Activated CD4-positive, alpha-beta T cell treated with anti-CD3 and anti-CD28 coated beads for 36 hours (primary cell): ENCODE measurements at regions of chr11 and their contacts with region 1.

Region 1: GRCh38 chr11:119334174-119334930 is at the start of gene RNF26:
- DNase-seq: peak; percentile 96
- ATAC-seq: peak; percentile 96
- H3K4me3 Mint-ChIP-seq: peak within 1 kb of the TSS; percentile 99
- H3K27ac Mint-ChIP-seq: peak within 1 kb of the TSS; percentile 99
- H3K4me1 Mint-ChIP-seq: peaks cover 29% of the 10 kb centered on the region
- H3K27me3 Mint-ChIP-seq: peaks cover 7% of the 10 kb centered on the region
- total RNA-seq, gene RNF26: 29.9 TPM

Region 2: DNA sequence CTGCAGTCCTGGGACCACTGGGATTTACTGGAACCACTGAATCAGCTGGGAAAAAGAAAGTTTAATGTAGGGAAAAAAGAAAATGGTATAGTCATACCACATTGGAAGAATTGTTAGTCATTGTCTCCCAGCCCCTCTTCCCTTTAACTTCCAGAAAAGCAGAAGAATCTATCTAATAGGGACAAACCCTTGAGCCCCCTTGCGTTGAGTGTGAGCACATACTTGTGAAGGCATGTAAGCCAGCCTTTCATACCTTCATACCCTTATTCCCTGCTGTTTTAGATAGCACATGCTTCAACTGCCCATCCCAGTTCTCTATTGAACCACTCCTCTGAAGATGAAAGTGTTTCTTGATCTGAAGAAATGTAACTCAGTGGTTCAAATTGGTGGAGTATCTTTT is 661.5 kb before region 1 on chr11:
- CTCF ChIA-PET with region 1: no interaction called
- POLR2A ChIA-PET with region 1: no interaction called
- intact Hi-C with region 1: no loop called
- DNase-seq: no peak
- ATAC-seq: no peak
- H3K4me3 Mint-ChIP-seq: no peak overlapping the region
- H3K27ac Mint-ChIP-seq: no peak overlapping the region
- H3K4me1 Mint-ChIP-seq: no peaks in the 10 kb centered on the region
- H3K27me3 Mint-ChIP-seq: peaks cover 8% of the 10 kb centered on the region

Region 3: DNA sequence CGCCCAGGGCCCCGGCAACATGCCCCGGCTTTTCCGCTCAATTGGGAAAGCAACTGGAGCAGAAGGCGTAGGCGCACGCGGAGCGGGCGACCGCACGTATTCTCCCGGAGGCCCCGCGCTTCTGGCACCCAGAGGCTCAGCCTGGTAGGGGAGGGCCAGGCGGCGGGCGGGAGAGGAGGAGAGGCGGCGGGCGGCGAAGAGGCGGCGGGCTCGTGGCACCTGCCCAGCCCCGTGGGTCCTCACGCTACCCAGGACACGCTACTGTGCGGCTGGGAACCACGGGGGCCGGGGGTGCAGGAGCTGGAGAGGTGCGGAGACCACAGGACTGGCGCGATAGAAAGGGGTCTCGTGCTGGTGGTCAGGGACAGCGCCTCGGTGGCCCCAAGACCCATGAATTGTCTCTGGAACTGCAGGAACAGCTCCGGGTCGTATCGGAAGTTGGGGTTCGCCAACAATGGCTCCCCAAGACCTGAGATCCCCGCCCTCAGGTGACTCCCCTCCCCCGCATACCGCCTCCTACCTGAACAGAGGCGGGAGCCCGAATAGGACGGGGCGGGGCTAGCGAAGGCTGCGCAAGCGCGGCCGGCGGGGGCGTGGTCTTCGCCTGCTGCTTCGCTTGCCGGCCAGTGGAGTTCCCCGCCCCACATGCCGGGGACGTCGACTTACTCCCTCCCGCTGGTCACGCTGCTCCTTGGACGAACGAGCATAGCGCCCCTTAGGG is 303.9 kb before region 1 on chr11 and contains the start of gene SLC37A4:
- CTCF ChIA-PET with region 1: no interaction called
- POLR2A ChIA-PET with region 1: no interaction called
- intact Hi-C with region 1: loop called in 1 of 2 experiments (anchors 1 kb)
- DNase-seq: peak; percentile 99
- ATAC-seq: peak; percentile 94
- H3K4me3 Mint-ChIP-seq: peak within 1 kb of the TSS; percentile 76
- H3K27ac Mint-ChIP-seq: peak within 1 kb of the TSS; percentile 86
- H3K4me1 Mint-ChIP-seq: peaks cover 19% of the 10 kb centered on the region
- H3K27me3 Mint-ChIP-seq: no peaks in the 10 kb centered on the region
- total RNA-seq, gene SLC37A4: 26.2 to 36.2 TPM

Region 4: DNA sequence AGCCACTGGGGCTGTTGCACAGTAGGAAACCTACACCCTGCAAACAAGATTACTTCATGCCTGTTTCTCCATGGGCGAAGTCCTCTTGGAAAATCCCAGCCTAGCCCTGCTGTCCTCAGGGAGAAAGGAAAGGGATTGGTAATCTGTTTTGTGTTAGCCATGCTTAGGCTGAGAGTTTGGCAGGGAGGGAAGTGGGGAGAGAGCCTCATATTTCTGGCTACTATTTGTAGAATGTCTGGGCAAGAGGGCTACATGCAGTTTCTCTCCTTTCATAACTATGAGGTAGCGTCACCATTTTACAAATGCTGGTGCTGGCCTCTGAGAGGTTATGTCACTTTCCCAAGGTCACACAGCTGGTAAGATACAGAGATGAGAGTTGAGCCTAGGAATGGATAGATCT is 12.9 kb after region 1 on chr11:
- CTCF ChIA-PET with region 1: interaction called, 23 read pairs
- POLR2A ChIA-PET with region 1: no interaction called
- intact Hi-C with region 1: no loop called
- DNase-seq: no peak
- ATAC-seq: no peak
- H3K4me3 Mint-ChIP-seq: no peak overlapping the region
- H3K27ac Mint-ChIP-seq: no peak overlapping the region
- H3K4me1 Mint-ChIP-seq: peaks cover 4% of the 10 kb centered on the region
- H3K27me3 Mint-ChIP-seq: peaks cover 26% of the 10 kb centered on the region

Region 5: DNA sequence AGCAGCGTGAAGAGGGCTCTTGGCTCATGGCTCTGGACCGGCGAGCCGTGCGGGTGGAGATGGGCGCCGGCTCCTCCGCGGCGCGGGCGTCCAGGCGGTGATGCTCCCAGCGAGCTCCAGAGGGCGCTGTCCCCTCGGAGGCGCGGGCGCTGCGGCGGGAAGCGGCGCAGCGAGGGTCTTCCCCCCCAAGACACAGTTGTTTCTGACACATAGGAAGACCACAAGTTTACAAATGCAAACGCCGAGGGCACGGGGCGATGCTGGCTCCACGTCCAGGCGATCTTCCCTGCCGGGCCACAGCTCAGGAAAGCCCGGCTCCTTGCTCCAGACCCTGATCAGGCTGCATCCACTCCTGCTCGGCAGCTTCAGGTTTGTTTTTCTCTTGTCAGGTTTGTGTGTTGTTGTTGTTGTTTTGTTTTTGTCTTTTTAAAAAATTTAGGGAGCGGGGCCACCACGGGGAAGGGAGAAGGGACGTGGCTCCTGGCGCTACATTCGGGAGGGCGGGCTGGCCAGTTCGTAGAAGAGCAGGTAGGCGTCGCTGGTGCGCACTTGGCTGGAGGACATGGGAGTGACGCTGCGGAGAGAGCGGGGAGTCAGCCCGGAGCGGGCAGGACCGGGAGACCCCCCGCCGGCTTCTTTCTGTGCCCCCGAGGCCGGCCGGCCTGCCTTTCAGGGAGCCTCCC is 22.1 kb after region 1 on chr11:
- CTCF ChIA-PET with region 1: interaction called, 19 read pairs
- POLR2A ChIA-PET with region 1: interaction called, 5 read pairs
- intact Hi-C with region 1: loop called in 1 of 2 experiments (anchors 1 kb)
- DNase-seq: peak; percentile 89
- ATAC-seq: peak; percentile 80
- H3K4me3 Mint-ChIP-seq: peak overlapping the region; percentile 70
- H3K27ac Mint-ChIP-seq: peak overlapping the region; percentile 70
- H3K4me1 Mint-ChIP-seq: peaks cover 17% of the 10 kb centered on the region
- H3K27me3 Mint-ChIP-seq: peaks cover 29% of the 10 kb centered on the region

Region 6: DNA sequence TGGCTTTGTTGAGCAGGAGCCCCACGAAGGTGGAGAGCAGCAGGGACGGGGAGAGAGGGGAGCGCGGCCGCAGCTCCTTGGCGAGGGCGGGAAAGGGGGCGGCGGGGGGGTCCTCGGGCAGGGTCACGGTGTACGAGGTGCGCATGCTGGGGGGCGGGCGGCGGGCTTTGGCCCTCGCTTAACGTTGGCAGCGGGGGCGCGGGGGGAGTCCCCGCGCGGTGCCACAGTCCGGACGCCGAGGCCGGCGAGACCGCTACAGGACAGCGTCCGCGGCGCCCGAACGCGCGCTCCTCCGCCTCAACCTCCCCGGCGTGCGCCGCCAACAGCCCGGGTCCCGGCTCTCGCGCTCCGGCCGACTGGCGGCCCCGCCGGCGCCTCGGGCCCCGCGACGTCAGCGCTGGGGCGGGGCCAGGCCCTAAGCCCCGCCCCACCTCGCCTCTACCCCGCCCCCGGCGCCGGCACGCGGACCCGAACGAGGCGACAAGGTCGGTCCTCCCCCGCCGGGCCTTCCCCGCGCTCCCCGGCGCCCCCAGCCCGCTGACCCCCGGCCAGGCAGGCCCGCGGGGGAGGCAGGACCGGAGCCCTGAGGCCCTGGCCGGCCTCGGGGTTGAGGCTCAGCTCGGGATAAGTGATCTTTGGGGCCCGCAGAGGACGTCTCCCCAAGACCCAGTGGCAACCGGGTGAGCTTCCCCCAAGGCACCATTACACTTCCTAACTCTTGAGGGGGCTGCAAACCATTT is 29.7 kb after region 1 on chr11:
- CTCF ChIA-PET with region 1: interaction called, 13 read pairs
- POLR2A ChIA-PET with region 1: interaction called, 3 read pairs
- intact Hi-C with region 1: no loop called
- DNase-seq: peak; percentile 74
- ATAC-seq: peak; percentile 49
- H3K4me3 Mint-ChIP-seq: peak overlapping the region; percentile 37
- H3K27ac Mint-ChIP-seq: no peak overlapping the region
- H3K4me1 Mint-ChIP-seq: peaks cover 26% of the 10 kb centered on the region
- H3K27me3 Mint-ChIP-seq: peaks cover 38% of the 10 kb centered on the region

Region 7: GRCh38 chr11:119381181-119381988 is 47.0 kb after region 1 on chr11 and contains the start of gene USP2:
- CTCF ChIA-PET with region 1: interaction called, 16 read pairs
- POLR2A ChIA-PET with region 1: no interaction called
- intact Hi-C with region 1: loop called in 1 of 2 experiments (anchors 1 kb)
- DNase-seq: peak; percentile 98
- ATAC-seq: peak; percentile 98
- H3K4me3 Mint-ChIP-seq: no peak within 1 kb of the TSS
- H3K27ac Mint-ChIP-seq: peak within 1 kb of the TSS; percentile 18
- H3K4me1 Mint-ChIP-seq: peaks cover 7% of the 10 kb centered on the region
- H3K27me3 Mint-ChIP-seq: no peaks in the 10 kb centered on the region
- total RNA-seq, gene USP2: 0.58 to 0.71 TPM

Region 8: GRCh38 chr11:119474682-119475596 is 140.6 kb after region 1 on chr11:
- CTCF ChIA-PET with region 1: interaction called, 10 read pairs
- POLR2A ChIA-PET with region 1: no interaction called
- intact Hi-C with region 1: loop called in 1 of 2 experiments (anchors 5 kb)
- DNase-seq: peak; percentile 77
- ATAC-seq: peak; percentile 83
- H3K4me3 Mint-ChIP-seq: no peak overlapping the region
- H3K27ac Mint-ChIP-seq: no peak overlapping the region
- H3K4me1 Mint-ChIP-seq: no peaks in the 10 kb centered on the region
- H3K27me3 Mint-ChIP-seq: peaks cover 21% of the 10 kb centered on the region